Ovary (tissue), 10 donors: ENCODE measurements at regions of chr14 and their contacts with region 1.

Region 1: GRCh38 chr14:77067632-77068514 is 30.2 kb upstream of the CIPC start:
- DNase-seq: peak; percentile 61 to 80 (median 73)
- H3K4me3 ChIP-seq: no peak overlapping the region
- H3K27ac ChIP-seq: no peak overlapping the region
- H3K4me1 ChIP-seq: peaks cover 1% of the 10 kb centered on the region
- H3K27me3 ChIP-seq: no peaks in the 10 kb centered on the region
- CTCF ChIP-seq: peak; percentile 63 to 75 (median 73)
- EP300 ChIP-seq: no peak
- POLR2A ChIP-seq: no peak

Region 2: GRCh38 chr14:76910371-76910890 is 157.4 kb before region 1 on chr14:
- intact Hi-C with region 1: loop called (anchors 2 to 5 kb)
- DNase-seq: no peak
- H3K4me3 ChIP-seq: no peak overlapping the region
- H3K27ac ChIP-seq: no peak overlapping the region
- H3K4me1 ChIP-seq: peaks cover 6% of the 10 kb centered on the region
- H3K27me3 ChIP-seq: no peaks in the 10 kb centered on the region
- CTCF ChIP-seq: no peak
- EP300 ChIP-seq: no peak
- POLR2A ChIP-seq: no peak

Region 3: GRCh38 chr14:77086017-77086736 is 18.3 kb after region 1 on chr14:
- intact Hi-C with region 1: no loop called
- DNase-seq: no peak
- H3K4me3 ChIP-seq: no peak overlapping the region
- H3K27ac ChIP-seq: no peak overlapping the region
- H3K4me1 ChIP-seq: no peaks in the 10 kb centered on the region
- H3K27me3 ChIP-seq: no peaks in the 10 kb centered on the region
- CTCF ChIP-seq: no peak
- EP300 ChIP-seq: no peak
- POLR2A ChIP-seq: no peak